A673 (cell line): ENCODE measurements at regions of chr15 and their contacts with region 1.

Region 1: DNA sequence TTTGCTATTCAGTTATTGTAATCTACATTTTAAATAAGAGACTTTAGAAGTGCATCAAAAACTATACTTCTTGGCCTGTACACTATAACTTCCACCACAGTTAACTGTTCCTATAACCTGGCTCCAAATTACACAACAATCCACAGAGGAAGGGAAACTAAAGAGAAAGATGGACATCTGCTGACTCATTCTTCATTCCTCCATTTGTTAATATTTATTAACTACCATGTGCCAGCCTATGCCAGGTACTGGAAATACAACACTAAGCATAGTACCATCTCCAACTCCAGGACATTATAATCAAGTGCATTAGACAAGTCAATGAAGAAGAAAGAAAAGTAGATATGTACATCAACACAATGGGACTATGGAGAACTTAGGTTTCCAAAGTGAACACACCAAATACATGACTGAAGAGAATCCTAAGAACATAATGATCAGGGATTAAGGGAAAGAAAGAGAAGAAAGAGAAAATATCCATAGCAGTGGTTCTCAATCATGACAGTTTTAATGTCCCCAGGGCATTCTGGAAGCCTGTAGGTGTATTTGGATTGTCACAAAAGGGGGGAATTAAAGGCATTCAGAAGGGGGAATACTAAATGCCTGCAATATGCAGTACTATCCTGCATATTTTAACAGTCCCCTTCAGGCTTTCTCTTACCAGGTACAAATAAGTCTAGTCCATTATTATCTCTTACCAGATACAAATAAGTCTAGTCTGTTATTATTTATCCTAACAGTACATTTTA is 8.9 kb downstream of the ICE2 start:
- DNase-seq: peak; percentile 15
- H3K4me3 ChIP-seq: no peak overlapping the region
- H3K27ac ChIP-seq: peak overlapping the region; percentile 27
- H3K4me1 ChIP-seq: peaks cover 18% of the 10 kb centered on the region
- H3K27me3 ChIP-seq: no peaks in the 10 kb centered on the region
- CTCF ChIP-seq: no peak

Region 2: GRCh38 chr15:59124261-59124660 is 1345.8 kb before region 1 on chr15:
- CTCF ChIA-PET with region 1: no interaction called
- POLR2A ChIA-PET with region 1: interaction called, 16 read pairs
- intact Hi-C with region 1: no loop called
- DNase-seq: no peak
- H3K4me3 ChIP-seq: no peak overlapping the region
- H3K27ac ChIP-seq: no peak overlapping the region
- H3K4me1 ChIP-seq: no peaks in the 10 kb centered on the region
- H3K27me3 ChIP-seq: no peaks in the 10 kb centered on the region
- CTCF ChIP-seq: no peak

Region 3: DNA sequence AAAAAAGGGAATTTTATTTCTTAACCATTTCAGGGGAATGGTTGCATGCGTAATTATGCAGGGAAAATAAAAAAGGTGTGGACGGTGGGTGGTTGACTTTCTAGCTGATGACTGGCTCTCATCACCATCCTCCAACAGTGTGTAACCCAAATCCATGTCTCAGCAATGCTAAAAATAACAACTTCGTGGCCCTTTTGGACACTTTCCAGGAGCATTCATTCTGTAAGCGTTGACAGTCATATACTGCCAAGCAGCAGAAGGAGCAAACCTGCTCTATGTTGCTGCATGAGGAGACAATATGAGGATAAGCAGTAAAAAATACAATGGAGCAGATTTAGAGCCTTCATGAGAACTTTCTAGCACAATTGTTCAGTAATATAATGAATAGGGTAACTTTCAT is 261.4 kb before region 1 on chr15:
- CTCF ChIA-PET with region 1: no interaction called
- POLR2A ChIA-PET with region 1: no interaction called
- intact Hi-C with region 1: no loop called
- DNase-seq: no peak
- H3K4me3 ChIP-seq: no peak overlapping the region
- H3K27ac ChIP-seq: no peak overlapping the region
- H3K4me1 ChIP-seq: no peaks in the 10 kb centered on the region
- H3K27me3 ChIP-seq: peaks cover 40% of the 10 kb centered on the region
- CTCF ChIP-seq: no peak

Region 4: GRCh38 chr15:61916104-61916503 is 1446.0 kb after region 1 on chr15:
- CTCF ChIA-PET with region 1: no interaction called
- POLR2A ChIA-PET with region 1: no interaction called
- intact Hi-C with region 1: no loop called
- DNase-seq: peak; percentile 65
- H3K4me3 ChIP-seq: no peak overlapping the region
- H3K27ac ChIP-seq: no peak overlapping the region
- H3K4me1 ChIP-seq: peaks cover 6% of the 10 kb centered on the region
- H3K27me3 ChIP-seq: no peaks in the 10 kb centered on the region
- CTCF ChIP-seq: no peak